ENCODE measurements at regions of chr4 and their contacts with region 1.

Region 1: GRCh38 chr4:164956766-164957643 is 20.5 kb downstream of the TRIM61 start:
- DNase-seq: peak; percentile 66
- ATAC-seq: peak; percentile 100
- H3K4me3 Mint-ChIP-seq: peak overlapping the region; percentile 90
- H3K27ac Mint-ChIP-seq: peak overlapping the region; percentile 68
- H3K4me1 Mint-ChIP-seq: peaks cover 21% of the 10 kb centered on the region
- H3K27me3 Mint-ChIP-seq: peaks cover 12% of the 10 kb centered on the region
- CTCF ChIP-seq: no peak

Region 2: DNA sequence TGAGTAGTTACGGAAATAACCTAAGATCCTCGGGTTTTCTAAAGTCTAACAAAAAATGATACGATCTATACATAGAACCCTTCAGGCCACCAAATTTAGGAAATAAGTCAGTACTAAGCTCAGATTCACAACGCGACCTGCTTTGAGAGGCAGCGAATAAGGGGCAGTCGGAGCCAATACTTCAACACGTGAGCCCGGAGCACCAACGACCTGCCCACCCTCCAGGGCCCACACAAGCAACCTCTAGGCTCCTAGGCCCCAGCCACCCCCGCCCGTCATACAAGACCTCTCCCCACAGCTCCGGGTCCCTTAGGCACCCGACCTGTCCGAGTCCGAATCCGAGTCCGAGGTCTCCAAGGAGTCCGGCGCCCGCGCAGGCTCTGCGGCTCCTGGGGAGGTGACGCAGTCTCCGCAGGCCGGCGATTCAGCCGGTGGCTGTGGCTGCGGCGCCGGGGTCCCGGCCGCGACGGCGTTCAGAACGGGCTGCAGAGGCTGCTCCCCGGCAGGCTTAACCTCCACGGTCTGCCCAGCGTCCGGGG is 1790.9 kb before region 1 on chr4:
- CTCF ChIA-PET with region 1: no interaction called
- POLR2A ChIA-PET with region 1: no interaction called
- intact Hi-C with region 1: loop called (anchors 5 kb)
- DNase-seq: peak; percentile 63
- ATAC-seq: peak; percentile 64
- H3K4me3 Mint-ChIP-seq: peak overlapping the region; percentile 91
- H3K27ac Mint-ChIP-seq: peak overlapping the region; percentile 95
- H3K4me1 Mint-ChIP-seq: peaks cover 27% of the 10 kb centered on the region
- H3K27me3 Mint-ChIP-seq: no peaks in the 10 kb centered on the region
- CTCF ChIP-seq: no peak

Region 3: GRCh38 chr4:164926301-164926700 is 30.7 kb before region 1 on chr4:
- CTCF ChIA-PET with region 1: no interaction called
- POLR2A ChIA-PET with region 1: no interaction called
- intact Hi-C with region 1: no loop called
- DNase-seq: no peak
- ATAC-seq: no peak
- H3K4me3 Mint-ChIP-seq: no peak overlapping the region
- H3K27ac Mint-ChIP-seq: no peak overlapping the region
- H3K4me1 Mint-ChIP-seq: no peaks in the 10 kb centered on the region
- H3K27me3 Mint-ChIP-seq: peaks cover 4% of the 10 kb centered on the region
- CTCF ChIP-seq: no peak

Region 4: DNA sequence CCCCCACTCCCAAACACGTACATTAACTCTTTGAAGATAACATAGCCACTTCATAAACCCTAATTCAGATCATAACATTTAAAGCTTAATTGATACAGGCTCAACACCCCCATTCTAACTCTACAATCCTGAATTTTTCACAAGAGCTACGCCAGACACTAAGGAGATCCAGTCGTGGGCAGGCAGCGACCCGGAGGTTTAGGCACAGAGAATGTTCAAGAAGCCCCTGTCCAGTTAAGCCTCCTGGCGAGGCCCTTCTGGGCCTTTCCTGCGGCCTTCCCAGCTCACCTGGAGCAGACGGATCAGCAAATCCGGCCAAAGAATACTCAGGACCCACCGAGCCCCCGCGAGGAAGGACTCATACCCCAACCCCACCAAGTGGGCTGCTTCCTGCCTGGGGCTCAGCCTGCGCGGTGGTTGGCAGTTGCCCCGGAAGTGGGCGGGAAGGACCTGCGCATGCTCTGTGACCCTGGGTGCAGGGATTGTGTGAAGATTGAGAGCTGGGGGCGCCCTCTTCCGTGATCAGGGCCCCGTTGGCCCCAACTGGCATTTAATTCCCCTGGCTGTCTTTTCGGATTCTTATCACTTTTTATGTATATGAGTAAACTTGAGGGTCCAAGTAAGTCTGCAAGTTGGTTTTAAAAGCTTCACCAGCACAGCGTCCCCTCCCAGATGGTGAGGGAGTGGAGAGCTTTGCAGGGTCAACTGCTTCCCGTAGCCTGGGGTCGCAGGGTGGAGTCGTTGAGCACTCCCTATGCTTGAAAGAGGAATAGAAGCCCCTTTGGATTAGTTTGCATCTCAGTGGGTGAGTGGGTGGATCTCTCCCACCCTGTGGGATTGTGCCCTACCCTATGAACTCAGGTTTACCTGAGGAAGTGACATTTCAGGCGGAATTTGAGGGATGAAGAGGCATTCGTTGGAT is 20.5 kb after region 1 on chr4 and contains the start of gene TRIM61:
- CTCF ChIA-PET with region 1: no interaction called
- POLR2A ChIA-PET with region 1: interaction called, 8 read pairs
- intact Hi-C with region 1: loop called (anchors 2 kb)
- DNase-seq: peak; percentile 37
- ATAC-seq: peak; percentile 94
- H3K4me3 Mint-ChIP-seq: peak within 1 kb of the TSS; percentile 91
- H3K27ac Mint-ChIP-seq: peak within 1 kb of the TSS; percentile 80
- H3K4me1 Mint-ChIP-seq: peaks cover 23% of the 10 kb centered on the region
- H3K27me3 Mint-ChIP-seq: no peaks in the 10 kb centered on the region
- CTCF ChIP-seq: no peak
- total RNA-seq, gene TRIM61: 2.1 and 3.6 TPM in 2 replicates

Region 5: DNA sequence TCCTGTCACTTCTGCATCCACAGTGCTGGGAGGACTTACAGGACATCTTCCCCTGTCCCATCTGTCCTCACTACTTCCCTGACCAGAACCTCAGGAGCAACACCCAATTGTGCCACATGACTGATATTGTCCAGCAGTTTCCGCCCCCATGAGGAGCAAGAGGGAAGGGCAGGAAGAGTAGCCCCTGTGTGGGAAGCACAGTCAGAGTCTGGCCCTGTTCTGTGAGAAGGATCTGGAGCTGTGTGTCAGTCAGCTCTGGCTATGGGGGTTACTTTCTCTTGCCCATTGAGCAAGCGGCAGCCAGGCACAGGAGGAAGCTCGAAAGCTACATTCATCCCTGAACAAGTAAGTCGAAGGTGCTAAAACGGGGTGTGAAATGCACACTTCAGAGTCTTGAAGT is 60.0 kb after region 1 on chr4:
- CTCF ChIA-PET with region 1: no interaction called
- POLR2A ChIA-PET with region 1: no interaction called
- intact Hi-C with region 1: no loop called
- DNase-seq: no peak
- ATAC-seq: no peak
- H3K4me3 Mint-ChIP-seq: no peak overlapping the region
- H3K27ac Mint-ChIP-seq: no peak overlapping the region
- H3K4me1 Mint-ChIP-seq: no peaks in the 10 kb centered on the region
- H3K27me3 Mint-ChIP-seq: no peaks in the 10 kb centered on the region
- CTCF ChIP-seq: no peak

Region 6: DNA sequence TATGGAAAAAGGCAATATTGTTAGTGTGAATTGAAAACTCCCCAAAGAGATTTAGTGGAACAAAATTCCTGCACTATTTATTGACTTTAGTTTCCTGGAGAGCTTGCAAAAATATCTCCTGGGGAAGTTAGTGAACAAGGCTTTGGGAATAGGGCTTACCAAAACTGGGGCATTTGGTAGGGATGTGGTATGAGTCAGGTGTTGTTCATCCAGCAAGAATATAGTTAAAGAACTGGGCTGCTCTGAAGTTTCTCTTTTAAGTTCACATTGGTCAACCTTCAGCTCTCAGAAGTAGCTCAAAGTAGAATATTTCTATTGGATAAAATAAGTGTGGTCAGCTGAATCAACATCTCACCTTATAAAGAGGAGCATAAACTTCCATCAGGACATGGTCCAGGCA is 606.8 kb after region 1 on chr4:
- CTCF ChIA-PET with region 1: no interaction called
- POLR2A ChIA-PET with region 1: no interaction called
- intact Hi-C with region 1: no loop called
- DNase-seq: no peak
- ATAC-seq: no peak
- H3K4me3 Mint-ChIP-seq: no peak overlapping the region
- H3K27ac Mint-ChIP-seq: no peak overlapping the region
- H3K4me1 Mint-ChIP-seq: no peaks in the 10 kb centered on the region
- H3K27me3 Mint-ChIP-seq: no peaks in the 10 kb centered on the region
- CTCF ChIP-seq: no peak

Region 7: GRCh38 chr4:166435449-166435848 is 1478.4 kb after region 1 on chr4:
- CTCF ChIA-PET with region 1: no interaction called
- POLR2A ChIA-PET with region 1: no interaction called
- intact Hi-C with region 1: no loop called
- DNase-seq: no peak
- ATAC-seq: no peak
- H3K4me3 Mint-ChIP-seq: no peak overlapping the region
- H3K27ac Mint-ChIP-seq: no peak overlapping the region
- H3K4me1 Mint-ChIP-seq: no peaks in the 10 kb centered on the region
- H3K27me3 Mint-ChIP-seq: no peaks in the 10 kb centered on the region
- CTCF ChIP-seq: no peak

Measured in activated B cell treated with CpG ODN at 0.5 μM for 24 hours (primary cell).